Naive thymus-derived CD8-positive, alpha-beta T cell (primary cell): ENCODE measurements at regions of chr19 and their contacts with region 1.

Region 1: DNA sequence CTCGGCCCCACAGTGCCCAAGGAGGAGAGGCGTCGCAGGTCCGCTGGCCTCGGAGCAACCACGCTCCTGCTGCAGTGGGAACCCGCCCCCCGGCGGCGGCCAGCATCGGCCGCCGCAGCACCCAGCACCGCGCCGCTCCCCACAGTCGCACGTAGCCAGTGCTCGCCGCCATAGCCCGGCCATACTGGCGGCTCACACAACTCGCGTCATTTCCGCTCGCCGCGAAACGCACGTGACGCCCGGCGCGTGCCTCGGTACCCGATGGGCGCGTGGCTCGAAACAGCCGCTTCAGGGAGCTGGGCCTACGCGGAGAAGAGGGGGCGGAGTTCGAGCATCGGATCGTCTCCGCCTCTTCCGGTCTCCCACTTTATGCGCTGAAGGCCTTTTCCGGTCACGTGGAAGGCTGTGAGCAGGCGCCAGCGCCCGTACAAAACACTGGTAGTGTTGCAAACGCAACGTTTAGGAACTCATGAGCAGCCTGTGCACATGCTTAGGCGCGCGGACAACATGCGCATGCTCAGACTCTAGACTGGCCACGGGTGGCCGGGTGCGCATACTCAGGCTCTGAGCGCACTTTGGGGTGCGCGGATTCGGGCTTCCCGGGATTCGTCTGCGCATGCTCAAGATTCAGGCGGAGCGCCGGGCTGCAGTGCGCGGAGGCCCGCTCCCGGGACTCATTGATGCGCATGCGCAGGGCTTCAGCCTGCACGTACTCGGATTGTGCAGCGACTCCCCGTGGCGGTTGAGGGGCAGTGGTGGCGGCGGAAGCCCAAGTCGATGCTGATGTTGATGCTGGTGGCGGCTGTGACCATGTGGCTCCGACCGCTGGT is at the starts of genes CATSPERD and LONP1:
- DNase-seq: peak; percentile 96 to 99 (median 98)
- ATAC-seq: peak; percentile 84 to 90
- H3K4me3 Mint-ChIP-seq: peak within 1 kb of the TSS; percentile 88 to 96 (median 90)
- H3K27ac Mint-ChIP-seq: peak within 1 kb of the TSS; percentile 94 to 98 (median 96)
- H3K4me1 Mint-ChIP-seq: peaks cover 8 to 35% (median 20%) of the 10 kb centered on the region in 4 donors
- H3K27me3 Mint-ChIP-seq: peaks cover 0 to 4% (median 1%) of the 10 kb centered on the region in 5 donors
- polyA plus RNA-seq, gene CATSPERD: not detected
- polyA plus RNA-seq, gene LONP1: 19.9 to 45.5 (median 21.6) TPM

Region 2: GRCh38 chr19:5690125-5690954 is 29.8 kb before region 1 on chr19 and contains the start of gene RPL36:
- POLR2A ChIA-PET with region 1: interaction called, 68 read pairs
- DNase-seq: peak; percentile 96 to 99 (median 98)
- ATAC-seq: peak; percentile 58 to 65
- H3K4me3 Mint-ChIP-seq: peak within 1 kb of the TSS; percentile 90 to 99 (median 94)
- H3K27ac Mint-ChIP-seq: peak within 1 kb of the TSS; percentile 90 to 99 (median 96)
- H3K4me1 Mint-ChIP-seq: peaks cover 19 to 43% (median 36%) of the 10 kb centered on the region in 4 donors
- H3K27me3 Mint-ChIP-seq: no peaks in the 10 kb centered on the region
- polyA plus RNA-seq, gene RPL36: 2,357 to 2,883 (median 2,631) TPM

Region 3: DNA sequence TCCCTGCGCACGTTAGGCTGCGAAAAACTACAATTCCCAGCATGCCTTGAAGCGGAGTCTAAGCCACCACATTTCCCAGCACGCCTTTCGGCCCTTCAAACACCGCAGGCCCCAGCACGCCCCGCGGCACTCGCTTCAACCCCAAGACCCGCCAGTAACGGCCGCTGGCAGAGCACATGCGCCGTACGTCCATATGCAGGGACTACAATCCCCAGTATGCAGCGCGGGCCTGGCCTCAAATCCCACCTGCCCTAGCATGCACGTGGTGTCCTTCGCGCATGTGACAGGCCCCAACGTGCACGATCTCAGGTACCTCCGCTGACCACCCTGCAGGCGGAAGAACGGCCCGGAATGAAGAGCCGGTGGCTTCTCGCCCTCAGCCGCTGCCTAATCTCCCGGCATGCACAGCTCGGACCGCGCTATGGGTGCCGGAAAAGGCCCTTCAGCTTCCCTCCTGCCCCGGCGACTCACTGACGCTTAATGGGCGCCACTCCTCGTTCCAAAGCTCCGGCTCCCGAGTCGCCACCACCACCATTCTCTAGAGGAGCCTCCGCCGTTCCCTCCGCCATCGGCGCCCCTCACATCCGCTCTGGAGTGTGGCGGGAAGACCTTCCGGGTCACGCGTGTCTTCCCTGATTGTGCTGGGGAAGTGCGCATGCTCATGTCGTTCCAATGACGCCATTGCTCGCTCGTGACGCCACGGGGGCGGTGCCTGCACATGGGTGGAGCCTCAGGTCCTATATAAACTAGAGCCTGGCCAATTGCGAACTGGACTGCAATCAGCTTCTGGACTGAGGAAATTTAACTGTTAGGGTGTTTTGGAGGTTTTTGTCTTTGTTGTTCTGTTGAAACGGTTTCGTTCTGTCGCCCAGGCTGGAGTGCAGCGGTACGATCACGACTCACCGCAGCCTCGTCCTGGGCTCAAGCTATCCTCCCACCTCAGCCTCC is 70.7 kb after region 1 on chr19 and contains the start of gene DUS3L:
- POLR2A ChIA-PET with region 1: interaction called, 14 read pairs
- DNase-seq: peak; percentile 90 to 98 (median 95)
- ATAC-seq: peak; percentile 92 to 93
- H3K4me3 Mint-ChIP-seq: peak within 1 kb of the TSS; percentile 92 to 100 (median 99)
- H3K27ac Mint-ChIP-seq: peak within 1 kb of the TSS; percentile 99 to 100 (median 100)
- H3K4me1 Mint-ChIP-seq: peaks cover 13 to 21% (median 16%) of the 10 kb centered on the region in 4 donors
- H3K27me3 Mint-ChIP-seq: peaks cover 0 to 2% (median 0%) of the 10 kb centered on the region in 5 donors
- polyA plus RNA-seq, gene DUS3L: 26.3 to 43.2 (median 41.1) TPM